T-cell (primary cell): ENCODE measurements at regions of chr2 and their contacts with region 1.

Region 1: GRCh38 chr2:151325581-151326095 is 31.8 kb upstream of the TNFAIP6 start:
- DNase-seq: no peak
- ATAC-seq: no peak
- H3K4me3 ChIP-seq: no peak overlapping the region
- H3K4me3 Mint-ChIP-seq: no peak overlapping the region
- H3K27ac ChIP-seq: no peak overlapping the region
- H3K27ac Mint-ChIP-seq: no peak overlapping the region
- H3K4me1 ChIP-seq: no peaks in the 10 kb centered on the region
- H3K4me1 Mint-ChIP-seq: no peaks in the 10 kb centered on the region
- H3K27me3 ChIP-seq: peaks cover 0 to 5% of the 10 kb centered on the region in 2 experiments
- H3K27me3 Mint-ChIP-seq: no peaks in the 10 kb centered on the region

Region 2: GRCh38 chr2:151287513-151288250 is 38.0 kb before region 1 on chr2:
- CTCF ChIA-PET with region 1: no interaction called
- POLR2A ChIA-PET with region 1: no interaction called
- DNase-seq: no peak
- ATAC-seq: no peak
- H3K4me3 ChIP-seq: peak overlapping the region; percentile 84 to 91
- H3K4me3 Mint-ChIP-seq: peak overlapping the region; percentile 83 to 91 (median 91)
- H3K27ac ChIP-seq: peak overlapping the region; percentile 98
- H3K27ac Mint-ChIP-seq: peak overlapping the region; percentile 93 to 96
- H3K4me1 ChIP-seq: peaks cover 18 to 22% of the 10 kb centered on the region in 2 experiments
- H3K4me1 Mint-ChIP-seq: peaks cover 57 to 69% (median 65%) of the 10 kb centered on the region in 3 donors
- H3K27me3 ChIP-seq: no peaks in the 10 kb centered on the region
- H3K27me3 Mint-ChIP-seq: no peaks in the 10 kb centered on the region

Region 3: DNA sequence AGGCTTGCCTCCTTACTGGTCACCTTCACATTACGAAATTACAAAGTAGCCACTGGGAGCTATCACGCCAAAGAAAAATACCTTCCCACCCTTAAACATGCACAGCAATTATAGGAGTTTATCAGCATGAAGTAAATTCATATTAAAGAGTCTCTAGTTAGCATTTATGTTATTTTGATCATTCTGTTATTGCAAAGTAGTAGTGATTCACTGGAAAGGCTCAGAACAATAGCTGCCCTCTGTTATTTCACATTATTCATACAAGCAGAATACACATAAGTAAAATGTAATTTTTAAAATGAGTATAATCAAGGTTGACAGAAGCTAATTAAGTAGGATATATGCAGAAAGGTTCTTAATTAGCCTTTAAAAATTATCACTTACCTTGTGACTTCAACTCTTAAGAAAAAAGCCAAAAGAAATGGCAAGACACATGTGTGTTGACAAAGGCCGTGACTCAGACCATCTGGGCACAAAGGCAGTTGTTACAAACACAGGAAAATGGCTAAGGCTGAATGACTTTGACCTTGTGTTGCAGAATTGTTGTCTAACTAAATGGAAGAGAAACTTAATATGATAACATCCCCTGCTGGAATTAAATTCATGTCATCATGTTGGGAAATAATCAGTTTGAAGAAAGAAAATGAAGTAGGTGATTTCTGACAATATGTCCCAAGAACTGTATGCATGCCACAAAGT is 1501.1 kb after region 1 on chr2:
- CTCF ChIA-PET with region 1: no interaction called
- POLR2A ChIA-PET with region 1: interaction called in 1 of 2 experiments, 13 read pairs
- DNase-seq: no peak
- ATAC-seq: no peak
- H3K4me3 ChIP-seq: no peak overlapping the region
- H3K4me3 Mint-ChIP-seq: no peak overlapping the region
- H3K27ac ChIP-seq: no peak overlapping the region
- H3K27ac Mint-ChIP-seq: no peak overlapping the region
- H3K4me1 ChIP-seq: no peaks in the 10 kb centered on the region
- H3K4me1 Mint-ChIP-seq: no peaks in the 10 kb centered on the region
- H3K27me3 ChIP-seq: no peaks in the 10 kb centered on the region
- H3K27me3 Mint-ChIP-seq: peaks cover 4% of the 10 kb centered on the region in 2 donors